ENCODE measurements at regions of chr1 and their contacts with region 1.

Region 1: GRCh38 chr1:67832737-67833601 is at the start of gene GNG12:
- DNase-seq: peak; percentile 75 to 82 (median 80)
- ATAC-seq: peak; percentile 55 to 76 (median 74)
- H3K4me3 ChIP-seq: peak within 1 kb of the TSS; percentile 71 to 82 (median 80)
- H3K27ac ChIP-seq: peak within 1 kb of the TSS; percentile 55 to 90 (median 88)
- H3K4me1 ChIP-seq: peaks cover 0 to 20% (median 9%) of the 10 kb centered on the region in 4 donors
- H3K27me3 ChIP-seq: no peaks in the 10 kb centered on the region
- CTCF ChIP-seq: no peak
- POLR2A ChIP-seq: peak; percentile 46
- total RNA-seq, gene GNG12: 18.8 to 52.7 (median 33.9) TPM

Region 2: DNA sequence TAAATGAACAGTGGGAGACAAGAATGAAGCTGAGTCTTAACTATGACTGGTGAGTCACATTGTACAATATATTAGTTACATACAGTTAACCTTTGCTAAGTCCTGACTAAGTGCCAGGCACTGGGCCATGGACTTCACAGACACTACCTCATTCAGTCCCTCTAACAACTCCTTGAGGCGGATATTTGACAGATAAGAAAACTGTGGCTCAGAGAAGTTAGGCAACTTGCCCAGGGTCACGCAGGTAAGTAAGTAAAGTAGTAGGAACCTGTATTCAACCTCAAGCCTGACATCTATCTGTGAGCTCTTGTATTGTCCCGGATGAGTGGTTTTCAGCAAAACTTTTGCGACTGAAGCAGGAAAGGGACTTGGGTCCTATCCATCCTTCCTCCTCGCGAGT is 61.8 kb before region 1 on chr1:
- intact Hi-C with region 1: loop called (anchors 10 kb)
- DNase-seq: no peak
- ATAC-seq: peak in 3 of 4 donors; percentile 10 to 41 (median 20)
- H3K4me3 ChIP-seq: no peak overlapping the region
- H3K27ac ChIP-seq: no peak overlapping the region
- H3K4me1 ChIP-seq: no peaks in the 10 kb centered on the region
- H3K27me3 ChIP-seq: no peaks in the 10 kb centered on the region
- CTCF ChIP-seq: peak in 3 of 4 donors; percentile 7 to 20 (median 12)
- POLR2A ChIP-seq: no peak

Region 3: GRCh38 chr1:67921725-67922489 is 88.9 kb after region 1 on chr1:
- intact Hi-C with region 1: no loop called
- DNase-seq: no peak
- ATAC-seq: no peak
- H3K4me3 ChIP-seq: no peak overlapping the region
- H3K27ac ChIP-seq: no peak overlapping the region
- H3K4me1 ChIP-seq: no peaks in the 10 kb centered on the region
- H3K27me3 ChIP-seq: no peaks in the 10 kb centered on the region
- CTCF ChIP-seq: no peak
- POLR2A ChIP-seq: no peak